ENCODE measurements at regions of chr11 and their contacts with region 1.

Region 1: GRCh38 chr11:2778630-2779498 is 79.1 kb upstream of the KCNQ1OT1 start:
- DNase-seq: peak; percentile 97
- H3K4me3 Mint-ChIP-seq: peak overlapping the region; percentile 58
- H3K27ac Mint-ChIP-seq: peak overlapping the region; percentile 97
- H3K4me1 Mint-ChIP-seq: peaks cover 15% of the 10 kb centered on the region
- H3K27me3 Mint-ChIP-seq: peaks cover 4% of the 10 kb centered on the region
- CTCF ChIP-seq: peak; percentile 42

Region 2: GRCh38 chr11:2547806-2548205 is 231.1 kb before region 1 on chr11:
- CTCF ChIA-PET with region 1: no interaction called
- POLR2A ChIA-PET with region 1: no interaction called
- intact Hi-C with region 1: no loop called
- DNase-seq: no peak
- H3K4me3 Mint-ChIP-seq: no peak overlapping the region
- H3K27ac Mint-ChIP-seq: no peak overlapping the region
- H3K4me1 Mint-ChIP-seq: no peaks in the 10 kb centered on the region
- H3K27me3 Mint-ChIP-seq: peaks cover 19% of the 10 kb centered on the region
- CTCF ChIP-seq: no peak

Region 3: GRCh38 chr11:2825889-2826678 is 47.2 kb after region 1 on chr11:
- CTCF ChIA-PET with region 1: interaction called, 3 read pairs
- POLR2A ChIA-PET with region 1: interaction called, 8 read pairs
- intact Hi-C with region 1: loop called (anchors 1 kb)
- DNase-seq: peak; percentile 94
- H3K4me3 Mint-ChIP-seq: peak overlapping the region; percentile 65
- H3K27ac Mint-ChIP-seq: peak overlapping the region; percentile 97
- H3K4me1 Mint-ChIP-seq: peaks cover 37% of the 10 kb centered on the region
- H3K27me3 Mint-ChIP-seq: no peaks in the 10 kb centered on the region
- CTCF ChIP-seq: no peak

Measured in MCF 10A (cell line).